Heart right ventricle (tissue), 16 donors: ENCODE measurements at regions of chr13 and their contacts with region 1.

Region 1: DNA sequence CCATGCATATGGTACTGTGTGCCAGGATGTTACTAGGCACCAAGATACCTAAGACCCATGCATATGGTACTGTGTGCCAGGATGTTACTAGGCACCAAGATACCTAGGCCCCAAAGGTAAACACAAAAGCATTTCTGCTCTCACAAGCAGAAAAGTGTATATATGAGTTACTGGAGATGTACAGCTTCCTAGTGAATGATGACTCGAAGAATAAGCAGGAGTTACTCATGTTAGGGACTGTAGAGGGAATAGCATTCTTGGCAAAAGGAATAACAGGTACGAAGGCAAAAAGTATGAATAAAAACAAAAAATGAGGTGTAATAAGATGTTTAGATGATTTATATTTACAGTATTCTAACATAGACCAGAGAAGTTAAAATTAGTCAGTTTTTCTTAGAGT is 383.7 kb downstream of the DIAPH3 start:
- DNase-seq: no peak
- ATAC-seq: no peak
- H3K4me3 ChIP-seq: no peak overlapping the region
- H3K27ac ChIP-seq: no peak overlapping the region
- H3K4me1 ChIP-seq: no peaks in the 10 kb centered on the region
- H3K27me3 ChIP-seq: no peaks in the 10 kb centered on the region
- CTCF ChIP-seq: no peak

Region 2: DNA sequence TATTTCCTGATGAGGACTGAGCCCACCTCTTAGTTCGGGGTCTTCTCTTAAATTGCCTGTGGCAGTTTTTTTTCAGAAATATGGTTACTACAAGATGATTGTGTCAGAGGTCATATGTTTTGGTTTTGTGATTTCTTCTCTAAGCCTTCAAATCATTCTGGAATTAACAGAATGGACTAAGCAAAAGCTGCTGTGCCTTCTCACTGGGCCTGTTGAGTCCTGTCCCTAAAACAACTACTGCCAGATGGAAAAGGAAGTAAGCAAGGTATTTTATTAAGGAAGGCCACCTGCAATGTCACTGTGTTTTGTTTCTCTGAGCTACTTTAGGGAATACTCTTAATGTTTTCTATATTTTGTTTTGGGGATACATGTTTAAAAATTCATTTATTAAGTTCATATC is 1164.8 kb after region 1 on chr13:
- intact Hi-C with region 1: loop called in 1 of 10 experiments (anchors 10 kb)
- DNase-seq: no peak
- ATAC-seq: no peak
- H3K4me3 ChIP-seq: no peak overlapping the region
- H3K27ac ChIP-seq: no peak overlapping the region
- H3K4me1 ChIP-seq: no peaks in the 10 kb centered on the region
- H3K27me3 ChIP-seq: no peaks in the 10 kb centered on the region
- CTCF ChIP-seq: no peak